Activated CD4-positive, alpha-beta T cell treated with anti-CD3 and anti-CD28 coated beads, Interleukin-2, amount 10 ng/mL, durations not matched to agents 24 days and 14 days (primary cell): ENCODE measurements at regions of chr2 and their contacts with region 1.

Region 1: DNA sequence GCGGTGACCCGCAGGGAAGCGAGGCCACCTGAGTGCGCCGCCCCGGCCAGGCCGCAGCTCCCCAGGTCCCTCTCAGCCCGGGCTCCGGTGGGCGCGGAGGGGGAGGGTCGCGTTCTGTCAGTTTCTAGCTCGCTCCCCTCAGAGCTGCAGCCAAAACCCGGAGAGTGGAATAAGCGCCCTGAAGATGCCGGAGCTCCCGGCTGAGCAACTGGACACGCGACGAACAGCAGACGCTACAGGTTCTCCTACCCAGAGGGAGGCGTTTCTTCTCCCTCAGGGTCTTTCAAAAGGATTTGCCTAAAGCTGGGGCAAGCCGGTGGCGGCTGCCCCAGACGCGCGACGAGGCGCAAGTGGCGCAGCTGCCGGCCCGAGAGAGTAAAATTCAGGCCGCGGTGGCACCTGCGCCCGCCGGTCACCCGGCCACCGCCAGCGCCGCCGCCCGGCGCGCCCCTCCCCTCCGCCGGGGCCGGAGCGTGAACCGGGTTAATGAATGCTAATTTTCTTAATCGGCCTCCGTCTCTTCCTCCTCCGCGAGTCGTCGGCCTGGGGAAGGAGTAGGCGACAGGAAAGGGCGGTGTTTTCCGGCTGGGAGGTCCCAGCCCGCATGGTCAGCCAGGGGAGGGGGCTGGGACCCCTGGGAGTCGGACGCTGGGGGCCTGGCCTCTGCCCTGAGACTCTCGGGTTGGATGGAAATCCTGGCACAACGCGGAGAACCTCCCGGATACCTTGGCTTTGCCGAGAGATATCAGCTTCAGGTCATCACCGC is 845 bp upstream of the CDC42EP3 start:
- DNase-seq: peak; percentile 92
- H3K4me3 Mint-ChIP-seq: peak overlapping the region; percentile 88
- H3K27ac Mint-ChIP-seq: peak overlapping the region; percentile 76
- H3K4me1 Mint-ChIP-seq: peaks cover 37% of the 10 kb centered on the region
- H3K27me3 Mint-ChIP-seq: peaks cover 5% of the 10 kb centered on the region

Region 2: GRCh38 chr2:37436323-37436722 is 236.0 kb before region 1 on chr2:
- intact Hi-C with region 1: no loop called
- DNase-seq: no peak
- H3K4me3 Mint-ChIP-seq: no peak overlapping the region
- H3K27ac Mint-ChIP-seq: no peak overlapping the region
- H3K4me1 Mint-ChIP-seq: no peaks in the 10 kb centered on the region
- H3K27me3 Mint-ChIP-seq: peaks cover 35% of the 10 kb centered on the region

Region 3: GRCh38 chr2:37489041-37489456 is 183.2 kb before region 1 on chr2:
- intact Hi-C with region 1: no loop called
- DNase-seq: no peak
- H3K4me3 Mint-ChIP-seq: no peak overlapping the region
- H3K27ac Mint-ChIP-seq: no peak overlapping the region
- H3K4me1 Mint-ChIP-seq: no peaks in the 10 kb centered on the region
- H3K27me3 Mint-ChIP-seq: peaks cover 20% of the 10 kb centered on the region

Region 4: DNA sequence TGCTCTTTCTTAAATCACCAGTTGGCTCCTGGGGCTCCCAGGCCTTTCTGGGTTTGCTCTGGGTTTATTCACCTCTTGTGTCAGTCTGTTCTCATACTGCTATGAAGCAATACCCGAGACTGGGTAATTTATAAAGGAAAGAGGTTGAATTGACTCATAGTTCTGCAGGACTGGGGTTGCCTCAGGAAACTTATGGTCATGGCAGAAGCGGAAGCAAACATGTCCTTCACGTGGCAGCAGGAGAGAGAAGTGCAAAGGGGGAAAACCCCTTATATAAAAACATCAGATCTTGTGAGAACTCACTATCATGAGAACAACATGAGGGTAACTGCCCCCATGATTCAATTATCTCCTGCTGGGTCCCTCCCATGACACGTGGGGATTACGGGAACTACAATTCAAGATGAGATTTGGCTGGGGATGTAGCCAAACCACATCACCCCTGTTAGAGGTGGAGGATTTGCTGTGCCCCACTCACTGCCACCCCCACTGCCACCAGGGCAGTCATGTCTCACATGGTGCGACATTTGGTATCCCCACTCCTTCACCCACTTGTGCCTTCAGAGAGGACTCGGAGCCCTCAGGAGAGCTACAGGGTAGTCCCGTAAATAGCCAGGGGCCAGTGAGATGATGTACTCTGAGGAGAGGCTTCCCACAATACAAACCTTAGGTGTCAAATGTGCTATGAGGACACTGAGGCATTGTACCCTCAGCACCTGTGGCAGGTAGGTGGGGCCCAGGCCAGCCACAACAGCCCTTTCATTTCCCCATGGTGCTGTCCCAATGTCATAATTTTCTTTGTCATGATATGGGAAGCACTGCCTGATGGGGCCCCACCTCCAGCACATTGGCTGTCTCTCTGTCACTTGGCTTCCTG is 36.5 kb before region 1 on chr2:
- intact Hi-C with region 1: loop called (anchors 1 kb)
- DNase-seq: peak; percentile 89
- H3K4me3 Mint-ChIP-seq: peak overlapping the region; percentile 46
- H3K27ac Mint-ChIP-seq: peak overlapping the region; percentile 83
- H3K4me1 Mint-ChIP-seq: peaks cover 31% of the 10 kb centered on the region
- H3K27me3 Mint-ChIP-seq: peaks cover 13% of the 10 kb centered on the region

Region 5: DNA sequence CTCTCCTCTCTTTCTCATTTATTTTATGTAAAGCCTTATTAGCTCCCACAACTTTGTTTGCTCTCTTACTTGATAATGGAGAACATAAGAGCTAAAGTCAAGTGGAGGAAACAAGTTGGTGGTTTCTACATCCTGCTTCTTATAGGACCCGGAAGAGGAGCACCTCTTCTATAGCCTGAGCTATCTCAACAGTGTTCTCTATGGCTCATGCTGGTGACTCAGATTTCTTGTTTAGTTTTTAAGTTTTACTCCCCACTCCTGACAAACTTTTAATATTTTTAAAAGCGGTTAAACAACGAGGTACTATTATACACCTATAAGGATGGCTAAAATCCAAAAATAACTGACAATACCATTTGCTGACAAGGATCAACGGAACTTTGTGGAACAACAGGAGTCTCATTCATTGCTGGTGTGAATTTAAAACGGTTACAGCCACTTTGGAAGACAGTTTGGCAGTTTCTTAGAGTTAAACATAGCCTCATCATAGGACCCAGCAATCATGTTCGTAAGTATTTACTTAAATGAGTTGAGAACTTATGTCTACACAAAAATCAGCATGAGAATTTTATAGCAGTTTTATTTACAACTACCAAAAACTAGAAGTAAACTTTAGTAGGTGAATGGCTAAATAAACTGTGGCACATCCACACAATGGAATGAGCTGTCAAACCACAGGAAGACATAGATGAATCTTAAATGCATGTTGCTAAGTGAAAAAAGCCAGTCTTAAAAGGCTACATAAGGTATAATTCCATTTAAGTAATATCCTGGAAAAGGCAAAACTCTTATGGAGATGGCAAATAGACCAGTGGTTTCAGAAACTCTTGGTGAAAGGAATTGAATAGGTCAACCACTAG is 11.9 kb after region 1 on chr2:
- intact Hi-C with region 1: loop called (anchors 1 kb)
- DNase-seq: peak; percentile 72
- H3K4me3 Mint-ChIP-seq: peak overlapping the region; percentile 46
- H3K27ac Mint-ChIP-seq: peak overlapping the region; percentile 81
- H3K4me1 Mint-ChIP-seq: peaks cover 22% of the 10 kb centered on the region
- H3K27me3 Mint-ChIP-seq: peaks cover 3% of the 10 kb centered on the region

Region 6: GRCh38 chr2:37711308-37711731 is 39.0 kb after region 1 on chr2:
- intact Hi-C with region 1: loop called (anchors 5 kb)
- DNase-seq: peak; percentile 83
- H3K4me3 Mint-ChIP-seq: peak overlapping the region; percentile 1
- H3K27ac Mint-ChIP-seq: peak overlapping the region; percentile 14
- H3K4me1 Mint-ChIP-seq: peaks cover 43% of the 10 kb centered on the region
- H3K27me3 Mint-ChIP-seq: peaks cover under 1% of the 10 kb centered on the region

Region 7: DNA sequence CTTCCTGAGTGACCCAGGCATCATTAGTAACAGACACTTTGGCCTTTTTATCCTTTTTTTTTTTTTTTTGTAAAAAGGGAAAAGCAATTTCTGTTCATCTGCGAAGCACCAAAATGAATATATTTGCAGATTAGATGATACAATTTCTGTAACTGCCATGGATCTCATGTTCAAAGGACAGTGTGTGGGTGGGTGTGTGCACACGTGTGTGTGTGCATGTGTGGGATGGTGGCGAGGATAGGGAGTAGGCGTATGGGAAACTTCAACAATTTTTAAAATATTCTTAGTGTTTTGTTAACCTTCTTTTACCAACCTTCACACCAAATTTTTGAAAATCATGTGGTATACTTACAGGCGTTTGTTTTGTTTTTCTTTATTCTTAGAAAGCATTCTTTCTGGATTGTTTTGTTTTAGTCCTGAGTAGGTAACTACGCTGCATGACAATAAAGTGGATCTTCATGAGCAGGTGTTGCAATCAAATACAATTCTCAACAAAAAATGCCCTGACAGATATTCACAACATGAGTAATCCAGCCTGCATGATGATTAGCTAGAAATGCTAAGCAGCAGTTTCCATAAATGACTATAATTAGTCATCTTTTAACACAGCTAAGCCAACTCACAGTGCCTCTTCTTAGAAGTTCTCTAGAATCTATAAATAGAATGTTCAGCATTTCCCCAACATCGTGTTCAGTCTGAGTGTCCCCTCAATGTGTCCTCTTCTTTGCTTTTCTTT is 199.3 kb after region 1 on chr2:
- intact Hi-C with region 1: loop called (anchors 5 kb)
- DNase-seq: no peak
- H3K4me3 Mint-ChIP-seq: peak overlapping the region; percentile 69
- H3K27ac Mint-ChIP-seq: peak overlapping the region; percentile 94
- H3K4me1 Mint-ChIP-seq: peaks cover 45% of the 10 kb centered on the region
- H3K27me3 Mint-ChIP-seq: peaks cover 2% of the 10 kb centered on the region